ENCODE measurements at regions of chr14 and their contacts with region 1.

Region 1: DNA sequence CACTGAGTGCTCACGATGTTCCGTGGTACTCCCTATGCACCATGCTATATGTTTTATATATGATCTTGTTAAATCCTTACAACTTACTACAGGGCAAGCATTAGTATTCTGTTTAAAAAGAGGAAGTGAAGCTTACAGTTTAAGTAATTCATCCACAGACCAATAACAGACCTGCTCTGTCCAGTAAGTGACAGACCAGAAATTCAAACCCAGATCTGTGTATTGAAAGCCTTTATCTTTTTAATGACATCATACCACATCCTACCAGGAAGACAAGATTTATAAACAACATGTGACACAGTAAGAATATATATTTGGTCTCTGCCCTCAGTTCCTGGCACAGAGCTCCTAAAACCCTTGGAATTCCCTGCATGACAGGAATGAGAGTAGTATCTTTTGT is 206.5 kb downstream of the STXBP6 start:
- DNase-seq: no peak
- ATAC-seq: no peak
- H3K4me3 ChIP-seq: no peak overlapping the region
- H3K27ac ChIP-seq: no peak overlapping the region
- H3K4me1 ChIP-seq: peaks cover 59% of the 10 kb centered on the region
- H3K27me3 ChIP-seq: no peaks in the 10 kb centered on the region
- CTCF ChIP-seq: no peak
- EP300 ChIP-seq: no peak
- POLR2A ChIP-seq: no peak
- RAD21 ChIP-seq: no peak

Region 2: GRCh38 chr14:24741871-24742270 is 101.6 kb before region 1 on chr14:
- CTCF ChIA-PET with region 1: no interaction called
- POLR2A ChIA-PET with region 1: no interaction called
- in situ Hi-C with region 1: no loop called
- intact Hi-C with region 1: no loop called
- DNase-seq: no peak
- ATAC-seq: no peak; the same call in 2 of the 3 replicates
- H3K4me3 ChIP-seq: no peak overlapping the region
- H3K27ac ChIP-seq: no peak overlapping the region
- H3K4me1 ChIP-seq: no peaks in the 10 kb centered on the region
- H3K27me3 ChIP-seq: no peaks in the 10 kb centered on the region
- CTCF ChIP-seq: no peak
- EP300 ChIP-seq: no peak
- POLR2A ChIP-seq: no peak
- RAD21 ChIP-seq: no peak

Region 3: GRCh38 chr14:24806061-24806678 is 37.3 kb before region 1 on chr14:
- CTCF ChIA-PET with region 1: no interaction called
- POLR2A ChIA-PET with region 1: interaction called, 43 read pairs
- in situ Hi-C with region 1: no loop called
- intact Hi-C with region 1: loop called (anchors 5 kb)
- DNase-seq: peak; percentile 88
- ATAC-seq: peak; percentile 81
- H3K4me3 ChIP-seq: no peak overlapping the region
- H3K27ac ChIP-seq: no peak overlapping the region
- H3K4me1 ChIP-seq: peaks cover 58% of the 10 kb centered on the region
- H3K27me3 ChIP-seq: no peaks in the 10 kb centered on the region
- CTCF ChIP-seq: peak; percentile 99
- EP300 ChIP-seq: no peak
- POLR2A ChIP-seq: no peak
- RAD21 ChIP-seq: peak; percentile 99

Region 4: DNA sequence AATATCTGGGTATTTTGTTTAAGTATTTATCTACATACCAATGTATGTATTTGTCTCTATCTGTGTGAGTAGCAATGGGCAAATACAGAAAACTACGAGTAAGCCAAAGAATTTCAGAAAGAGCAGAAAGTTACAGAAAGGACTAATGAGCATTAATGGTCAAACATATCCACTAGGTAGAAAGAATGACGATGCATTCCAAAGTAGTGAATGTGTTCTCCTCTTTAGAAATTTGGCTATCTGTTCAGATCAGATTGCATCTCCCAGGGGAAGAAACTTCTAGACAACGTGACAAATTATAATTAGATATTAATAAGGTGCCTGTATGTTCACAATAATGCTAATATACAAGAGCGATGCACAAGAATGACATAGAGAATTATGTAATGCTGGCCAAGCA is 15.0 kb before region 1 on chr14:
- CTCF ChIA-PET with region 1: no interaction called
- POLR2A ChIA-PET with region 1: interaction called, 12 read pairs
- in situ Hi-C with region 1: no loop called
- intact Hi-C with region 1: no loop called
- DNase-seq: no peak
- ATAC-seq: no peak
- H3K4me3 ChIP-seq: no peak overlapping the region
- H3K27ac ChIP-seq: no peak overlapping the region
- H3K4me1 ChIP-seq: peaks cover 10% of the 10 kb centered on the region
- H3K27me3 ChIP-seq: no peaks in the 10 kb centered on the region
- CTCF ChIP-seq: no peak
- EP300 ChIP-seq: no peak
- POLR2A ChIP-seq: no peak
- RAD21 ChIP-seq: no peak

Region 5: DNA sequence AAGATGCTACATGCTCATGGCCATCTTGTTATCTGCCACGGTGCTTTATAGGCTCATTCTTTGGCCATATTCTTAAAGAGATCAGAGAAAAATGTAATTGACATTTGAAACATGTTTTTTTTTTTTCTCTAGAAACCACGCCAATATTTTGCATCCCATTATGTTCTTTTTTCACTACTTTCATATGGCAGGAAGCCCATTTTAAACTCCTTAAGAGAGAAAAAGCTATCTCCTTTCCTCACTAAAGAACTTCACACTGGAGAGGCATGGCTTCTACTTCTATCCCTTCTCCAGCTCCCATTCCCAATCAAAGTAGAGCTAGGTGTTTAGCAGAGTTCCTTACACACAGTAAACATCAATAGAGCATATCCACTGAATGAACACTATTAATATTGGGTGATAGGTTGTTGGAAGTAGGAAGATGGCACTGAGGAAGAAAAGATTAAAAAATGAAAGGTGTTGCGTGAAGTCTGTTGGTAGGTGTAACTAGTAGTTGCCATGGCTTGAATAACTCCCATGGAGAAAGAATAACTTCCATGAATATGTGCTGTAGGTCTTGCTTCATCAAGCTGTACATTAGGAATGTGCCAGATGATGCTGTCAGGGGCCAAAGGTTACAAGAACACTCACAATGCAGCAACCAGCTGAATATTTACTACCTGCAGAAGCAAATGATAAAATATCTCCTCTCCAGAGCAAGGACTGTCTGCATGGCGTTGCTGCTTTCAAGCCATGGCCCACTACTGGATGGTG is 27.6 kb after region 1 on chr14:
- CTCF ChIA-PET with region 1: no interaction called
- POLR2A ChIA-PET with region 1: interaction called, 24 read pairs
- in situ Hi-C with region 1: no loop called
- intact Hi-C with region 1: loop called (anchors 1 kb)
- DNase-seq: peak; percentile 87
- ATAC-seq: peak; percentile 78
- H3K4me3 ChIP-seq: no peak overlapping the region
- H3K27ac ChIP-seq: no peak overlapping the region
- H3K4me1 ChIP-seq: peaks cover 39% of the 10 kb centered on the region
- H3K27me3 ChIP-seq: no peaks in the 10 kb centered on the region
- CTCF ChIP-seq: no peak
- EP300 ChIP-seq: peak in 1 of 2 experiments; percentile 65; a peak in 2 of 4 replicates
- POLR2A ChIP-seq: no peak
- RAD21 ChIP-seq: no peak

Region 6: GRCh38 chr14:24887623-24888293 is 44.3 kb after region 1 on chr14:
- CTCF ChIA-PET with region 1: no interaction called
- POLR2A ChIA-PET with region 1: interaction called, 28 read pairs
- in situ Hi-C with region 1: no loop called
- intact Hi-C with region 1: loop called (anchors 5 kb)
- DNase-seq: no peak
- ATAC-seq: no peak
- H3K4me3 ChIP-seq: no peak overlapping the region
- H3K27ac ChIP-seq: no peak overlapping the region
- H3K4me1 ChIP-seq: peaks cover 49% of the 10 kb centered on the region
- H3K27me3 ChIP-seq: no peaks in the 10 kb centered on the region
- CTCF ChIP-seq: no peak
- EP300 ChIP-seq: no peak; a peak in 1 of 4 replicates
- POLR2A ChIP-seq: no peak
- RAD21 ChIP-seq: no peak

Region 7: GRCh38 chr14:24978862-24979724 is 135.6 kb after region 1 on chr14:
- CTCF ChIA-PET with region 1: no interaction called
- POLR2A ChIA-PET with region 1: interaction called, 26 read pairs
- in situ Hi-C with region 1: no loop called
- intact Hi-C with region 1: loop called (anchors 1 kb)
- DNase-seq: peak; percentile 93
- ATAC-seq: peak; percentile 89
- H3K4me3 ChIP-seq: no peak overlapping the region
- H3K27ac ChIP-seq: peak overlapping the region; percentile 31
- H3K4me1 ChIP-seq: peaks cover 58% of the 10 kb centered on the region
- H3K27me3 ChIP-seq: no peaks in the 10 kb centered on the region
- CTCF ChIP-seq: peak; percentile 19; the same call in 1 of the 2 replicates
- EP300 ChIP-seq: peak in 1 of 2 experiments; percentile 86; a peak in 2 of 4 replicates
- POLR2A ChIP-seq: no peak
- RAD21 ChIP-seq: no peak

Region 8: DNA sequence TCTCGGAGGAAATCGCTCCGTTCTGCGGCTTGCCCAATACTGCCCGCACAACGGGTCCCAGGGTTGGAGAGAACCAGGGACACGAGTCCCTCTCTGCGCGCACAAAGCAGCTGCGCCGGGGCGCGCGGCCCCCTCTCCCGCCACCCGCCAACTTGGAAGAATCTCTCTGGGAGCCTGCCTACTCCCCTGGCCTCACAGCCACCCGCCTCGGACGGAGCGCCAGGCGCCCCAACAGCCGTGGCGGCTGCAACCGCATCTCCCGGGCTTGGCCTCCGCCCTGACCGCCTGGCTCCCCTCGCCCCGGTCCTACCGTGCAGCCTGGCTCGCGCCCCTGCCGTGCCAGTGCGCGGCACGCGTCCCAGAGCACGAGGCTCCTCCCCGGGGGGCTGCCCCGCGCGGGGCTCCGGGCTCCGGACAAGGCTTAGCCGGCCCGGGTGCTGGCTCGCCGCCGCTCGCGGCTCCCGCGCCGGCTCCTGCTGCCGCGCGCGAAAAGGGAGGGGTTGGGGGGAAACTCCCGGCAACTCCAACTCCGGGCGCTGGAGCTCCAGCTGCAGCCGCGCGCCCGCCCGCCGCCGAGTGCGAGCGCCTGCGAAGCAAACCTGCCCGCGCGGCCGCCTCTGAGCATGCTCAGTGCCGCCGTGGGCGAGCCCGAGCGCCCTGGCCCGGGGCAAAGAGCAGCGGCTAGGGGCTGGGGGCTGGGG is 206.2 kb after region 1 on chr14 and contains the start of gene STXBP6:
- CTCF ChIA-PET with region 1: no interaction called
- POLR2A ChIA-PET with region 1: no interaction called
- in situ Hi-C with region 1: no loop called
- intact Hi-C with region 1: loop called (anchors 1 kb)
- DNase-seq: peak; percentile 65
- ATAC-seq: peak; percentile 97
- H3K4me3 ChIP-seq: peak within 1 kb of the TSS; percentile 65 to 82 (median 73)
- H3K27ac ChIP-seq: no peak within 1 kb of the TSS
- H3K4me1 ChIP-seq: peaks cover 41% of the 10 kb centered on the region
- H3K27me3 ChIP-seq: peaks cover 0 to 25% of the 10 kb centered on the region in 2 experiments; a peak in 3 of 5 replicates
- CTCF ChIP-seq: peak; percentile 6; the same call in 1 of the 2 replicates
- EP300 ChIP-seq: no peak
- POLR2A ChIP-seq: peak in 1 of 2 experiments; percentile 58; a peak in 1 of 4 replicates
- RAD21 ChIP-seq: 0 out of 2 replicates have a peak, but pooled peaks have one; percentile 68
- total RNA-seq, gene STXBP6: 35.3 and 43.2 TPM in 2 replicates